Prostate gland (tissue), 2 donors: ENCODE measurements at regions of chr10 and their contacts with region 1.

Region 1: GRCh38 chr10:12042797-12043651 is at the start of gene UPF2:
- DNase-seq: peak; percentile 96
- H3K4me3 ChIP-seq: peak within 1 kb of the TSS; percentile 90 to 98
- H3K27ac ChIP-seq: peak within 1 kb of the TSS; percentile 98
- H3K4me1 ChIP-seq: no peaks in the 10 kb centered on the region
- H3K27me3 ChIP-seq: no peaks in the 10 kb centered on the region
- CTCF ChIP-seq: peak in 1 of 4 experiments; percentile 18
- POLR2A ChIP-seq: no peak
- total RNA-seq, gene UPF2: 21.4 to 31.7 TPM

Region 2: GRCh38 chr10:11975795-11976194 is 67.2 kb before region 1 on chr10:
- intact Hi-C with region 1: no loop called
- DNase-seq: no peak
- H3K4me3 ChIP-seq: no peak overlapping the region
- H3K27ac ChIP-seq: no peak overlapping the region
- H3K4me1 ChIP-seq: no peaks in the 10 kb centered on the region
- H3K27me3 ChIP-seq: no peaks in the 10 kb centered on the region
- CTCF ChIP-seq: no peak
- POLR2A ChIP-seq: no peak

Region 3: DNA sequence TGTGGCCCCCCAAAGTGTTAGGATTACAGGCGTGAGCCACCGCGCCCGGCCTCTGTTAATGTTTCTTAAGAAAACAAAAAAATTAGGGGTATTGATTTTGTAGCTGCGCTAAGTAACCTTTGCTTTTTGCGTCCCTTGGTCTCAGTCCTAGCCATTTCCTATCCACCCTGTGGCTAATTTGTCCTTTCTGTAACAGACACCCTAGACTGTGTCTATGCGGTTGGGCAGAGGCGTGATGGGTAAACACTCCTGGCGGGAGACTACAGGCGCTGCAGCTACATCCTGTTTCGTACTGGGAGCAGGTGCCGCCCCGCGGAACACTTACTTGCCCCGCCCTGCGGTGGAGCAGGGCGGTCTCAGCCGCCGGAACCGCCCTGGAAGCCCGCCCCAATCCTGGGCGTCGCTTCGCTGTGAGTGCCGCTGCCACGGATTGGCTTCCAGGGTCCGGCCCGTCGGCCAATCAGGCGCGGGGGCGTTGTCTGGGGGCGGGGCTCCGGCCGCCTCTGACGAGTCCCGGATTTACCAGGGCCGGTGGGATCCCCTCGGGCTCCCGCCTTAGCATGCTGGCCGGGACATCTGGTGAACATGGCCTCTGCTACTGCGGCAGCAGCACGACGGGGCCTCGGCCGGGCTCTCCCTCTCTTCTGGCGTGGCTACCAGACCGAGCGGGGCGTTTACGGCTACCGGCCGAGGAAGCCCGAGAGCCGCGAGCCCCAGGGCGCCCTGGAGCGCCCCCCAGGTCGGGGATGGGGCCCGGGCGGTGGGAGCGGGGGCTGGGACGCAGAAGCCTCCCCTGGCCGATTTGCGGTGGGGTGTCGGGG is 25.6 kb after region 1 on chr10 and contains the start of gene DHTKD1:
- intact Hi-C with region 1: loop called (anchors 2 kb)
- DNase-seq: peak; percentile 98
- H3K4me3 ChIP-seq: peak within 1 kb of the TSS; percentile 95 to 100
- H3K27ac ChIP-seq: peak within 1 kb of the TSS; percentile 83 to 96
- H3K4me1 ChIP-seq: no peaks in the 10 kb centered on the region
- H3K27me3 ChIP-seq: no peaks in the 10 kb centered on the region
- CTCF ChIP-seq: peak in 2 of 4 experiments; percentile 72 to 76
- POLR2A ChIP-seq: peak; percentile 66
- total RNA-seq, gene DHTKD1: 33.4 to 59.2 TPM

Region 4: GRCh38 chr10:12129222-12130111 is 86.4 kb after region 1 on chr10 and contains the start of gene SEC61A2:
- intact Hi-C with region 1: loop called (anchors 1 kb)
- DNase-seq: peak; percentile 96
- H3K4me3 ChIP-seq: peak within 1 kb of the TSS; percentile 87 to 92
- H3K27ac ChIP-seq: peak within 1 kb of the TSS; percentile 88 to 95
- H3K4me1 ChIP-seq: no peaks in the 10 kb centered on the region
- H3K27me3 ChIP-seq: no peaks in the 10 kb centered on the region
- CTCF ChIP-seq: peak in 2 of 4 experiments; percentile 2 to 8
- POLR2A ChIP-seq: peak; percentile 78
- total RNA-seq, gene SEC61A2: 2.9 to 13.5 TPM